ENCODE measurements at regions of chr12 and their contacts with region 1.

Region 1: GRCh38 chr12:38664661-38665269 is 240.6 kb downstream of the CPNE8 start:
- DNase-seq: peak; percentile 15
- ATAC-seq: peak; percentile 94
- H3K4me3 ChIP-seq: no peak overlapping the region
- H3K27ac ChIP-seq: no peak overlapping the region
- H3K4me1 ChIP-seq: no peaks in the 10 kb centered on the region
- H3K27me3 ChIP-seq: no peaks in the 10 kb centered on the region
- CTCF ChIP-seq: peak; percentile 58 to 65 (median 61)
- EP300 ChIP-seq: no peak
- POLR2A ChIP-seq: no peak
- RAD21 ChIP-seq: peak; percentile 63

Region 2: GRCh38 chr12:38332814-38333213 is 332.0 kb before region 1 on chr12:
- CTCF ChIA-PET with region 1: no interaction called
- POLR2A ChIA-PET with region 1: no interaction called
- RAD21 ChIA-PET with region 1: no interaction called
- SMC1A ChIA-PET with region 1: interaction called, 3 read pairs
- in situ Hi-C with region 1: no loop called
- intact Hi-C with region 1: loop called (anchors 10 kb)
- DNase-seq: no peak
- ATAC-seq: no peak
- H3K4me3 ChIP-seq: no peak overlapping the region
- H3K27ac ChIP-seq: no peak overlapping the region
- H3K4me1 ChIP-seq: no peaks in the 10 kb centered on the region
- H3K27me3 ChIP-seq: no peaks in the 10 kb centered on the region
- CTCF ChIP-seq: no peak
- EP300 ChIP-seq: no peak
- POLR2A ChIP-seq: no peak
- RAD21 ChIP-seq: no peak

Region 3: GRCh38 chr12:38586652-38587243 is 78.0 kb before region 1 on chr12:
- CTCF ChIA-PET with region 1: no interaction called
- POLR2A ChIA-PET with region 1: no interaction called
- RAD21 ChIA-PET with region 1: no interaction called
- SMC1A ChIA-PET with region 1: no interaction called
- in situ Hi-C with region 1: no loop called
- intact Hi-C with region 1: no loop called
- DNase-seq: no peak
- ATAC-seq: no peak
- H3K4me3 ChIP-seq: no peak overlapping the region
- H3K27ac ChIP-seq: no peak overlapping the region
- H3K4me1 ChIP-seq: no peaks in the 10 kb centered on the region
- H3K27me3 ChIP-seq: no peaks in the 10 kb centered on the region
- CTCF ChIP-seq: no peak
- EP300 ChIP-seq: no peak
- POLR2A ChIP-seq: no peak
- RAD21 ChIP-seq: no peak

Region 4: DNA sequence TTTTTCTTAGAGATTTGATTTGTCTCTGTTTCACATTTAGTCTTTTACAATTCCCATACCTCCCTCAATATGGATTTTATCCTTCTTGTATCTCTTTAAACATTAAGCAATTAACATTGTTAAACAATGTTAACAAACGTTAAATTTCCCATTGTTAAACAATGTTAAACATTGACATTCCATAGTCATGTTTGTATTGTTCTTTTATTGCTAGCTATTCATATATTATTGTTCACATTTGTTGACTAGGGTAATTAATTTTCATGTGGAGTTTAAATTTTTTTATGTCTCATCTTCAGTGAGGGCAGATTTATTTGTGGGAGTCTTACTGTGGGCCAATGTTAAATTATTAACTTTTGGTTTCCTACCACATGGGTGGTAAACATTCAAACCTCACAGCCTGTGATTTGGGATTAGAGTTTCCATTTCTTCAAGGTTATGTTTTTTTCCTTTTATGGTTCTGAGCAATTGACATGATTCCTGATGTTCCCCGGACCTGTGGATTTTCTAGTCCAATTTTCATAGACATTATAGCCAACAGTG is 53.9 kb before region 1 on chr12:
- CTCF ChIA-PET with region 1: no interaction called
- POLR2A ChIA-PET with region 1: no interaction called
- RAD21 ChIA-PET with region 1: no interaction called
- SMC1A ChIA-PET with region 1: no interaction called
- in situ Hi-C with region 1: no loop called
- intact Hi-C with region 1: loop called (anchors 5 kb)
- DNase-seq: no peak
- ATAC-seq: peak; percentile 31; the same call in 1 of the 3 replicates
- H3K4me3 ChIP-seq: no peak overlapping the region
- H3K27ac ChIP-seq: no peak overlapping the region
- H3K4me1 ChIP-seq: no peaks in the 10 kb centered on the region
- H3K27me3 ChIP-seq: no peaks in the 10 kb centered on the region
- CTCF ChIP-seq: no peak
- EP300 ChIP-seq: no peak
- POLR2A ChIP-seq: no peak
- RAD21 ChIP-seq: no peak

Region 5: DNA sequence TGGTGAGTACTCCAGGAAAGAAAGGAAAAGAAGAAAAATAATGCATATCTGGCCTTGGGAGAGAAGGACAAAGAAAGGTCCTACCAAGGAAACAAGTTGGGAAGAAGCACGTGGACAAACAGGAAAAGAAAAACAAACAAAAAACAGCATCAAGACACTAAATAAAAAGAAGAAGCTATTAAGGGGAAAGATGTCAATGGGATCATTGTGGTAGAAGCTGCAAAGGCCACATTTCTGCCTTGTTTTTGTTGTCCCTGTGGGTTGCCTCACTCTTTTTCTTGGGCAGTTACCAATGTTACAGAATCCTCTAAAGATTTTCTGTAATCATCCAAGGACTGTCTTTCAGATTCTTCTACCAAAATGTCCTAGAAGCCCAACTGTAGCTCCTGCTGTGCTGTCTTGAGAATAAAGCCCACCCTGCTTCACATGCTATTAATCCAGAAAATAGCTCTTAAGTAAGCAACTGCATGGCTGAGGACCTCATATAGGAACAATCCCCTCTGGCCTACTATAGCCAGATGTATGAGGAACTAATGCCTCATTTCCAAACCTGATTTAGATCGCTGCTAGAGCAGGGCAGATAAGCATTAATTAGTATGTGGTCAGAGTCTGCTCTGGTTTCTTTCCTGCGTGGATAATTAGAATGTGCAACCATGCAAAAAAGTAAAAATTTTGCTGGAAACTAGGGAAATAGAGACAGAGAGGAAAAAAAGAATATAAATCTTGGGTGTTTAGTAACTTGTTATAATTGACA is 250.8 kb after region 1 on chr12:
- CTCF ChIA-PET with region 1: interaction called, 68 read pairs
- POLR2A ChIA-PET with region 1: no interaction called
- RAD21 ChIA-PET with region 1: interaction called, 24 read pairs
- SMC1A ChIA-PET with region 1: interaction called, 41 read pairs
- in situ Hi-C with region 1: no loop called
- intact Hi-C with region 1: no loop called
- DNase-seq: no peak
- ATAC-seq: no peak
- H3K4me3 ChIP-seq: no peak overlapping the region
- H3K27ac ChIP-seq: no peak overlapping the region
- H3K4me1 ChIP-seq: no peaks in the 10 kb centered on the region
- H3K27me3 ChIP-seq: no peaks in the 10 kb centered on the region
- CTCF ChIP-seq: no peak
- EP300 ChIP-seq: no peak
- POLR2A ChIP-seq: no peak
- RAD21 ChIP-seq: no peak